ENCODE measurements at regions of chr3 and their contacts with region 1.

Region 1: DNA sequence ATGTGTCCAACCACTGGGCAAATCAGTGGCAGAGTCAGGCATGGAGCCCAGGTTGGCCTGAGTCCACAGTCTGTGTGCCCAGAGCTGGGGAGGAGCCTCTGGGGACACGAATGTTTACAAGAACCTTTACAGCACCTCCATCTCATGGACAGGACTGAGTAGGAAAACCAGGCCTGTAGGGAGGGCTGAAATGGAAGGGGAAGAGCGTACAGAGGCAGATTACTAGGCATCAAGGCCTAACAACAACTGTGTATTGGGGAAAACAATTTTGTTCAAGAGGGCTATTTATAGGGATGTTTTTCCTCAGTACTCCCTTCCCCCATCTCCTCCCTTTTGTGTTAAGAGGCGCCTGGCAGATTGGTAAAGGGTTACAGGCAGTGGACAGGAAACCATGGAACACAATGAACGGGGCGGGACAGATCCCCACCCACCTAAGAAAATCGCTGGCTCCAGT is 15.1 kb upstream of the ARHGAP31 start:
- DNase-seq: no peak
- H3K4me3 ChIP-seq: no peak overlapping the region
- H3K27ac ChIP-seq: no peak overlapping the region
- H3K4me1 ChIP-seq: no peaks in the 10 kb centered on the region
- H3K27me3 ChIP-seq: peaks cover 2% of the 10 kb centered on the region
- CTCF ChIP-seq: no peak

Region 2: GRCh38 chr3:119331661-119332060 is 52.5 kb after region 1 on chr3:
- CTCF ChIA-PET with region 1: no interaction called
- dilution Hi-C with region 1: no loop called
- in situ Hi-C with region 1: no loop called
- intact Hi-C with region 1: no loop called
- DNase-seq: peak; percentile 14
- H3K4me3 ChIP-seq: no peak overlapping the region
- H3K27ac ChIP-seq: no peak overlapping the region
- H3K4me1 ChIP-seq: no peaks in the 10 kb centered on the region
- H3K27me3 ChIP-seq: no peaks in the 10 kb centered on the region
- CTCF ChIP-seq: no peak

Region 3: GRCh38 chr3:119352849-119353502 is 73.8 kb after region 1 on chr3:
- CTCF ChIA-PET with region 1: no interaction called
- dilution Hi-C with region 1: no loop called
- in situ Hi-C with region 1: no loop called
- intact Hi-C with region 1: loop called (anchors 1 kb)
- DNase-seq: peak; percentile 11
- H3K4me3 ChIP-seq: no peak overlapping the region
- H3K27ac ChIP-seq: no peak overlapping the region
- H3K4me1 ChIP-seq: peaks cover 5% of the 10 kb centered on the region
- H3K27me3 ChIP-seq: no peaks in the 10 kb centered on the region
- CTCF ChIP-seq: peak; percentile 24 to 42

Region 4: DNA sequence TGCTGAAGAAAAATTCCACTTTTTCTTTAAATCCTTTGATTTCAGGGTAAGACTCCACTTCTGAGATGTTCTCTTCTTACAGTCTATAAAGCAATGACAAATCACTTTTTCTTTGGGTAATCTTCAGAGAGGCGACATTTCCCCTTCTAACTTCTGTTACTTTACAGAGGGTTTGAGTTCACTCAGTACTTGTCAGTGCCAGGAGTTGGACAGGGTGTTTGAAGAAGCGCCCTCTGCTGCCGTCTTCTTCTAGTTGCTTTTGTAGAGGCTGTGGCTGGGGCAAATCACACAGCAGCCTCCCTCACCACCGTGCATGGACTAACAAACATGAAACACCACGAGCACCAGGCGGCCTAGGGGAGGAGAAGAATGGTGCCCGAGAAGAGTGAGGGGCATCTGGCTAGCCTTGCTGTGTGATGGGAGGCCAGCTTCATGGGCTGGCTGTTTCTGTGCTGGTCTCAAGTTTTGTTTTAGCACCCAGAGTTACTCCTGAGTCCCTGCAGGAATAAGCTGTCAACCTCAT is 280.4 kb after region 1 on chr3 and contains the start of gene CD80:
- CTCF ChIA-PET with region 1: no interaction called
- dilution Hi-C with region 1: no loop called
- in situ Hi-C with region 1: no loop called
- intact Hi-C with region 1: loop called (anchors 1 kb)
- DNase-seq: peak; percentile 16
- H3K4me3 ChIP-seq: no peak within 1 kb of the TSS
- H3K27ac ChIP-seq: no peak within 1 kb of the TSS
- H3K4me1 ChIP-seq: no peaks in the 10 kb centered on the region
- H3K27me3 ChIP-seq: no peaks in the 10 kb centered on the region
- CTCF ChIP-seq: peak in 1 of 2 donors; percentile 46
- total RNA-seq, gene CD80: not detected